Activated T-helper 2 cell treated with anti-CD3 and anti-CD28 coated beads, Interferon-gamma antibody, Interleukin-2, Interleukin-4, amounts not matched to agents 10 μg/mL and 5 μg/mL and 100 μg/mL, durations not matched to agents 14 hours and 24 hours and 36 hours (primary cell): ENCODE measurements at regions of chr2 and their contacts with region 1.

Region 1: DNA sequence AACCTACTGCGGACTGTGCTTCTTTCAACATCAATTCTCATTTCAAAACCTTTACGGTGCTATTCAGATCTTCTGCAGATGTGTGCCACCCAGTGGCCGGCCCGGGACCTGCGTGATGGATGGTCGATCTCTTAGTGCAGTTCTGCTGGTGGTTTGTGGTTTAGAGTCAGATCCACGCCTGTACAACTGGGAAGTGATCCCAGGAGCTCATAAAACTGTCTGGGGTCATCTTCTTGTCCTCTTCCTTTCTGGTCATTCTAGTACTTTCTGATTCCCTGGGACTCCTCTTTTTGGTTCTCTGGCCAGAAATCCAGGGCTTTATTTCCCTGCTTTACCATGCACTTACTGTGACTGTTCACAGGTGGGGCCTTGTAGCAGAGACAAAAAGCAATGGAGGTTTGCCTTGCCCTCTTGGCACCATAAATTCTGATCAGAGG is 15.8 kb upstream of the SELENOI start:
- DNase-seq: peak; percentile 75
- H3K4me3 Mint-ChIP-seq: no peak overlapping the region
- H3K27ac Mint-ChIP-seq: no peak overlapping the region
- H3K4me1 Mint-ChIP-seq: peaks cover 23% of the 10 kb centered on the region
- H3K27me3 Mint-ChIP-seq: no peaks in the 10 kb centered on the region

Region 2: GRCh38 chr2:26172871-26173775 is 157.0 kb before region 1 on chr2 and contains the start of gene GAREM2:
- intact Hi-C with region 1: loop called (anchors 5 kb)
- DNase-seq: no peak
- H3K4me3 Mint-ChIP-seq: peak within 1 kb of the TSS; percentile 88
- H3K27ac Mint-ChIP-seq: no peak within 1 kb of the TSS
- H3K4me1 Mint-ChIP-seq: peaks cover 7% of the 10 kb centered on the region
- H3K27me3 Mint-ChIP-seq: peaks cover 37% of the 10 kb centered on the region
- total RNA-seq, gene GAREM2: 3.9 and 5.9 TPM in 2 replicates

Region 3: GRCh38 chr2:26561918-26562810 is 232.0 kb after region 1 on chr2:
- intact Hi-C with region 1: no loop called
- DNase-seq: peak; percentile 28
- H3K4me3 Mint-ChIP-seq: peak overlapping the region; percentile 30
- H3K27ac Mint-ChIP-seq: no peak overlapping the region
- H3K4me1 Mint-ChIP-seq: peaks cover 6% of the 10 kb centered on the region
- H3K27me3 Mint-ChIP-seq: peaks cover 62% of the 10 kb centered on the region